Activated CD4-positive, alpha-beta T cell treated with anti-CD3 and anti-CD28 coated beads for 36 hours (primary cell): ENCODE measurements at regions of chr22 and their contacts with region 1.

Region 1: DNA sequence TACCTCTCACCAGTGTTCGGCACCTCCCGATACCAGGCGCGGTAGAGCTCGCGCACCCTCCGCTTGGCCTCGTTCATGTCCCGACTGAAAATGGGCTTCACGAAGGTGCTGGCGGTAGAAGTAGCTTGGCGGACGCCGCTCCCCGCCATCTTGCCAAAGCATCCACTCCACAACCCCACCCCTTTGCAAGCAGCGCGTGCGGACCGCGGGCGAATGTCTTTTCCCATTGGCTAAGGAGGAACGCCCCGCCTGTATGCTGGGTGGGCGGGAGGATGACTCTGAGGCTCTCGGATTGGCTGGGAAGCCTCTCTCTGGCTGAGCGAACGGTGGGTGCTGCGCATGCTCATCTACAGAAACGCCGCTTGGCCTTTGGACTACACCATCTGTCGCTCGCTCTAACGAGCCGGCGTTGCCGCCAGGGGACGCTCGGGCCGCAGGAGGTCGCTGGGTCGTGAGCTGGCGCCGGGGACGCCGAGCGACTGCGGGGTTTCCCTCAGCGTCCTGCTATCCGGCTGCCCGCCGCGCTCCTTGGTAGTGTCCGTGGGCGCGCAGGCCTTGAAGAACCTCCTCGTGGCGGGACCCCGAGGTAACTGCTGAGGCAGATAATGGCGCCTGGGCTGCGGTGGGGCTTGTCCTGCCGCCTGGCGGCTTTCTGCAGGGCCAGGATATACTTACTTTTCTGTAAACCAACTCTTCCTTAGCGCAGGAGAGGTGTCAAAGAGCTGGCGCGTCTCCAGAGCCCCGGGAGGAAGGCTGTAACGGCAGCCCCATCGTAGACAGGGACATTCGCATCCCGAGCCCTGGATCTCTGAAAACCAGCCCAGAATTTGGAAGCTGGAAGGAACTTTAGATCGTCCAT is at the start of gene NDUFA6:
- DNase-seq: peak; percentile 99
- ATAC-seq: peak; percentile 97
- H3K4me3 Mint-ChIP-seq: peak within 1 kb of the TSS; percentile 96
- H3K27ac Mint-ChIP-seq: peak within 1 kb of the TSS; percentile 99
- H3K4me1 Mint-ChIP-seq: peaks cover 30% of the 10 kb centered on the region
- H3K27me3 Mint-ChIP-seq: no peaks in the 10 kb centered on the region
- total RNA-seq, gene NDUFA6: 123 to 144 TPM

Region 2: DNA sequence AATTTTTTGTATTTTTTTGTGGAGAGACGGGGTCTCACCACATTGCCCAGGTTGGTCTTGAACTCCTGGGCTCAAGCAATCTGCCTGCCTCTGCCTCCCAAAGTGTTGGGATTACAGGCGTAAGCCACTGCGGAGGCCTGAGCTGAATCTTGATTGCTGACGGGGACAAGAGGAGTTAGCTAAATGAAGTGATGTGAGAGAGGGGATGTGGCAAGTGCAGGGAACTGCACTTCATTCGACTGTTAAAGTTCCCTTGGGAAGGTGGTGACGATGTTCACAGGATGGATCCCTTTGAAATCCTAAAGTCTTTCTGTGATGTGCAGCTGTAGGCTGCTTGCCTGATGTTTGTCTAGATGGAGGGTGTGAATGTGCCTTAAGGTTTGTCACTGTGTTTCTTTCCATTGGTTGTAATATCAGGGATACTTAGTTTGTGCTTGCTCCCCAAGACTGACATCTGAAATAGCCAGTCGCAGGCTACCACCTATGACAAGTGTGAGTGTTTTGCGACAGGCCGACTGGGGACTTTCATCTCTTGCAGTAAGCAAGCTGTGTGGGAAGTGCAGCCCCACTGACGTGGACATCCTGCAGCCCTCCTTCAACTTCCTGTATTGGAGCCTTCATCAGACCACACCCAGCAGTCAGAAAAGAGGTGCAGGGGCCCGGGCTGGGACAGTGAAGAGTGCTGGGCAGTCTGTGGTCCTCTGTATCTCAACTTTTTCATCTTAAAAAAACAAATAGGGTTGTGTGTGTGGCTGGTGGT is 309.9 kb before region 1 on chr22:
- CTCF ChIA-PET with region 1: interaction called, 3 read pairs
- POLR2A ChIA-PET with region 1: no interaction called
- intact Hi-C with region 1: loop called in 1 of 2 experiments (anchors 1 kb)
- DNase-seq: peak; percentile 95
- ATAC-seq: peak; percentile 94
- H3K4me3 Mint-ChIP-seq: peak overlapping the region; percentile 81
- H3K27ac Mint-ChIP-seq: peak overlapping the region; percentile 98
- H3K4me1 Mint-ChIP-seq: peaks cover 39% of the 10 kb centered on the region
- H3K27me3 Mint-ChIP-seq: no peaks in the 10 kb centered on the region

Region 3: DNA sequence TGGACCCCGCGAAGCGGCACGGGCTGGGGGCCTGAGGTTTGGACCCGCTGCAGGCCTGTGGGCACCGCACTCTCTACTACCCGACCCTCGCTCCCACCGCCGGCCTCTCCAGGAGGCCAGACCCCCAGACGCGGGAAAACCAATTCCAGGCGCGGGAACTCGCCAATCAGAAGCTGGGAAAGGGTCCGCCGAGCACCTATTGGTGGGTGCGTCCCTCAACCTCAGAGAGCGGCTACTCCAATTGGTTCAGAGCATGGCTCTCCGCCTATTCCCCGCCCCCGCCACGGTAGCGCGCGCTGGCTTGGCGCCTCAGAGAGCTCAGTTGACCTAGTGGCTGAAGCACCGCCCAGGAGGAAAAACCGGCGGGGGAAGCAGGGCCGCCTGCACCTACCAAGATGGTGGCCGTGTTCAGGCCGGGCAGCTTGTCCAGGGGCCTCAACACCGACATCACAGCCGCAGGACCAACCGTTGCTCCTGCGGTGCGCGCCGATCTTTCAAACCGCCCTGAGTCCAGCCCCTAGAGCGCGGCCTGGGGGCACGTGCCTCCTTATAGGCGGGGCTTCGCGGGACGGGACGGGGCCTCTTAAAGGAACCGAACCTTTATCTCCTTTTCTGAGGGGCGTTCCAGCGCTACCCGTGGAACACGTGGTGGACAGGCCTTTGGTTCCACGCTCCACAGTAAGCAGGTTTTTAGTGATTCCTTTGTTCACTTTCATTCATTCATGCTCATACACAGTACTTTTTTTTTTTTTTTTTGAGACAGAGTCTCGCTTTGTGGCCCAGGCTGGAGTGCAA is 144.0 kb before region 1 on chr22 and contains the start of gene CENPM:
- CTCF ChIA-PET with region 1: interaction called, 4 read pairs
- POLR2A ChIA-PET with region 1: no interaction called
- intact Hi-C with region 1: loop called in 1 of 2 experiments (anchors 1 kb)
- DNase-seq: peak; percentile 98
- ATAC-seq: peak; percentile 95
- H3K4me3 Mint-ChIP-seq: peak within 1 kb of the TSS; percentile 97
- H3K27ac Mint-ChIP-seq: peak within 1 kb of the TSS; percentile 92
- H3K4me1 Mint-ChIP-seq: peaks cover 59% of the 10 kb centered on the region
- H3K27me3 Mint-ChIP-seq: no peaks in the 10 kb centered on the region
- total RNA-seq, gene CENPM: 65.2 to 82.1 TPM

Region 4: GRCh38 chr22:42079319-42080251 is 11.2 kb before region 1 on chr22 and contains the start of gene SMDT1:
- CTCF ChIA-PET with region 1: interaction called, 34 read pairs
- POLR2A ChIA-PET with region 1: interaction called, 37 read pairs
- intact Hi-C with region 1: loop called (anchors 1 kb)
- DNase-seq: peak; percentile 99
- ATAC-seq: peak; percentile 95
- H3K4me3 Mint-ChIP-seq: peak within 1 kb of the TSS; percentile 90
- H3K27ac Mint-ChIP-seq: peak within 1 kb of the TSS; percentile 96
- H3K4me1 Mint-ChIP-seq: peaks cover 29% of the 10 kb centered on the region
- H3K27me3 Mint-ChIP-seq: no peaks in the 10 kb centered on the region
- total RNA-seq, gene SMDT1: 17.2 to 45.4 TPM

Region 5: DNA sequence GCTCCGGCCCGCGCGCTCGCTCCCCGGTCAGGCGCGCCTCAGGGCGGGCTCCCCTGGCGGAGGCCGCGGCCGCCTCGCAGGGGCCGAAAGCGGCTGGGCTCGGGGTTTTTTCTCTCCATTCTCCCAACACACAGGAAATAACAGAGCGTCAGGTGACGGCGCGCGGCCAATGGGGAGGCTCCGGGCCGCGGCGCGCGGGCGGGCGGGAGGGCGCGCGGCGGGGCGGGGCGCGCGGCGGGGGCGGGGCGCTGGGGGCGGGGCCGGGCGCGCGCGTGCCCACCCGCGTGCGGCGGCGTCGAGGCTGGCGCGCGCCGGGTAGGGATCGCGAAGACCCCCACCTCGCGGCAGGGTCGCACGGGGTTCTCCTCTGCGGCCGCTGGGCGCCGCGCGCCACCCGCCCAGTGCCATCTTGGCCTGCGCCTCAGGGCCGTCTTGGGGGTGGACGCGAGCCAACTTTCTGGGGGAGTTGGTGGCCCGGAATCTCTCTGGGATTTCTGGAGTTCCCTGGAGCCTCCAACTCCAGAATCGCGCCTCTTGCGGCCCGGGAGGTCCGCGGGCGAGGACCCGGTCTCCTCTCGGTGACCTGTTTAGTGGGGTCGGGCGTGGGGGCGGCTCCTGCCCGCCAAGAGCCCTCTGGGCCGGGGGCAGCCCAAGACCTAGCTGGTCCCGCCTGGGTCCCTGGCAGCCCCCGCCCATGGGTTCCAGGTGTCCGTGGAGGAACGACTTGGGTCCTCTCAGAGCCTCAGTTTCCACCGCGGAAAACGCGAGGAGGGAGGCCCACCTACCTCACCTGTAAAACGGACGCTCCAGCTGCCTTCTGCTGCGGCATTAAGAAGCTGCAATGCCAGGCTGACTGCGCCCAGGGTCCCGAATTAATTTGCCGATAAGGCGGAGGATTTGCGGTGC is 179.9 kb after region 1 on chr22 and contains the start of gene TCF20:
- CTCF ChIA-PET with region 1: no interaction called
- POLR2A ChIA-PET with region 1: no interaction called
- intact Hi-C with region 1: loop called (anchors 1 to 10 kb)
- DNase-seq: peak; percentile 88
- ATAC-seq: peak; percentile 85
- H3K4me3 Mint-ChIP-seq: peak within 1 kb of the TSS; percentile 96
- H3K27ac Mint-ChIP-seq: peak within 1 kb of the TSS; percentile 82
- H3K4me1 Mint-ChIP-seq: peaks cover 30% of the 10 kb centered on the region
- H3K27me3 Mint-ChIP-seq: no peaks in the 10 kb centered on the region
- total RNA-seq, gene TCF20: 64.1 to 68.3 TPM

Region 6: DNA sequence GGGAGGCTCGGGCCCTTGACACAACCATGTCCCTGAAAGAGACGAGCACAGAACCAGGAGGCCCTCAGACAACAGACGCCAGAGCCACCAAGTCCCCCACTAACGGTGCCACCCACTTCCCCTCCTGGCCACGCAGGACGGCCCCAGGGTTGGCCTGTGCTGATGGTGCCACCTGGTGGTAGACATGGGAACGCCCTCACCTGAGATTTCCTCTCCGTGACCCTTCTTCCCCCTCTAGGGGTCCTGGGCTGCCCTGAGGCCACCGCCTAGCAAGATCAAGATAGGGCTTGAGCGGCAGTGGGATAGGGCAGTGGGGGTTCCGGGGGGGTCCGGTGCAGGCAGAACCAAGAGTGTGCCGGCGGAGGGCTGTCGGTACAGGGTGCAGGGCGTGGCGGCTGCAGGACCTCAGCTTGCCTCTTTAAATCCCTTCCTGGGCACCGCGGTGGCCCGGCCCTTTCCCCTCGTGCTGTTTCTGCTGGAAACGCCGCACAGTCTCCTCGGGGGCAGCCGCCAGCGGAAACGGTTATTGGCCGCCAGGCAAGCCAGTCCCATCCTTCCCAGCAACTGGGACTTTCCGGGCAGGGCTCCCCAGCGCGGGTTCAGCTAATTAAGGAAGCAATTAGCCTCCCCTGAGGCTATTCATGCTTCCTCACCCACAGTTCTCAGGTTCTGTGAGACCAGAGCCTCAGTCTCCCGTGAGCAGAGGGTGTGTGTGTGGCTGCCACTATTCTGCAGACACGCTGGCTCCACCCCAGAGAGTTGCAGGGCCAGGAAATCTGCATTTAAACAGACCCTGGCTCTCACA is 346.9 kb after region 1 on chr22:
- CTCF ChIA-PET with region 1: interaction called, 24 read pairs
- POLR2A ChIA-PET with region 1: no interaction called
- intact Hi-C with region 1: loop called (anchors 1 to 2 kb)
- DNase-seq: peak; percentile 88
- ATAC-seq: peak; percentile 90
- H3K4me3 Mint-ChIP-seq: peak overlapping the region; percentile 66
- H3K27ac Mint-ChIP-seq: no peak overlapping the region
- H3K4me1 Mint-ChIP-seq: peaks cover 21% of the 10 kb centered on the region
- H3K27me3 Mint-ChIP-seq: peaks cover 2% of the 10 kb centered on the region

Region 7: GRCh38 chr22:42520663-42521546 is 430.1 kb after region 1 on chr22:
- CTCF ChIA-PET with region 1: no interaction called
- POLR2A ChIA-PET with region 1: no interaction called
- intact Hi-C with region 1: loop called in 1 of 2 experiments (anchors 1 kb)
- DNase-seq: no peak
- ATAC-seq: no peak
- H3K4me3 Mint-ChIP-seq: no peak overlapping the region
- H3K27ac Mint-ChIP-seq: no peak overlapping the region
- H3K4me1 Mint-ChIP-seq: peaks cover 9% of the 10 kb centered on the region
- H3K27me3 Mint-ChIP-seq: no peaks in the 10 kb centered on the region